ENCODE measurements at regions of chr11 and their contacts with region 1.

Region 1: GRCh38 chr11:129375751-129376657 is at the start of gene BARX2:
- ATAC-seq: peak; percentile 84 to 92 (median 88)
- H3K4me3 ChIP-seq: peak within 1 kb of the TSS; percentile 20 to 38 (median 34)
- H3K27ac ChIP-seq: no peak within 1 kb of the TSS
- H3K4me1 ChIP-seq: peaks cover 3 to 12% of the 10 kb centered on the region in 2 donors
- total RNA-seq, gene BARX2: 0.09 to 0.71 (median 0.40) TPM in 6 of 8 experiments, not detected in the others

Region 2: DNA sequence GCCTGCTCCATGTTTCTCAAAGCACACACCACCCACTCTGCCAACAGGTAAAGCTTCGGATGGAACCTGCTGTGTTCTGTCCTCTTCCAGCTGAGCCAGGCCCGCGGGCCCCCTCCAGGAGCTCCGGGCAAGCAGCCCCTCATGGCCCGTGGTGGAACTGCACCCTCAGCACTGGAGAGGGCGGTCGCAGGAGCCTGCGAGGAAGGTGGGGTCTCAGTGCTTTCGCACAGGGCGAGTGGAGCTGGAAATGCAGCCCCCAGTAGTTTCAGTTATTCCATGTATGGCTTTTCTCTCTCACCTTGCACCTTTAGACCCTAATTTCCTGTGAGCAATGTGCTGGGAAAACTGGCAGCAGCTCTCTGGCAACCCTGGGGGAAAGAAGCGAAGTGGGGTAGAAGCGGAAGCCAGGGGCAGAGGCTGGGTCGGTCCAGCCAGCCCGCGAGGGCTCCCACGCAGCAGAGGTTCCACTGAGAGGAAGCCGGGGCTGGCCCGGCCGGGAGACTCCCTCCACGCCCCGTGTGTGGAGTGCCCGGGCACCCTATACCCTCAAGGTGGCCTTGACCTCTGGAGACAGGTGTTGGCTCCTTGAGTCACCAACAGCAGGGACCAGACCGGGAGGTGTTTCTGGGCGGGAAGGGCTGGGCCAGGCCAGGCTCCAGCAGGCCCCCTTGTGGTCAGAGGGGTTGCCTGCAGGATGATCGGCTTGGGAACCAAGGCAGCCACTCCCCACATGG is 319.7 kb after region 1 on chr11:
- in situ Hi-C with region 1: loop called in 1 of 9 experiments (anchors 25 kb)
- ATAC-seq: peak; percentile 79 to 96 (median 85)
- H3K4me3 ChIP-seq: no peak overlapping the region
- H3K27ac ChIP-seq: no peak overlapping the region
- H3K4me1 ChIP-seq: no peaks in the 10 kb centered on the region

Region 3: DNA sequence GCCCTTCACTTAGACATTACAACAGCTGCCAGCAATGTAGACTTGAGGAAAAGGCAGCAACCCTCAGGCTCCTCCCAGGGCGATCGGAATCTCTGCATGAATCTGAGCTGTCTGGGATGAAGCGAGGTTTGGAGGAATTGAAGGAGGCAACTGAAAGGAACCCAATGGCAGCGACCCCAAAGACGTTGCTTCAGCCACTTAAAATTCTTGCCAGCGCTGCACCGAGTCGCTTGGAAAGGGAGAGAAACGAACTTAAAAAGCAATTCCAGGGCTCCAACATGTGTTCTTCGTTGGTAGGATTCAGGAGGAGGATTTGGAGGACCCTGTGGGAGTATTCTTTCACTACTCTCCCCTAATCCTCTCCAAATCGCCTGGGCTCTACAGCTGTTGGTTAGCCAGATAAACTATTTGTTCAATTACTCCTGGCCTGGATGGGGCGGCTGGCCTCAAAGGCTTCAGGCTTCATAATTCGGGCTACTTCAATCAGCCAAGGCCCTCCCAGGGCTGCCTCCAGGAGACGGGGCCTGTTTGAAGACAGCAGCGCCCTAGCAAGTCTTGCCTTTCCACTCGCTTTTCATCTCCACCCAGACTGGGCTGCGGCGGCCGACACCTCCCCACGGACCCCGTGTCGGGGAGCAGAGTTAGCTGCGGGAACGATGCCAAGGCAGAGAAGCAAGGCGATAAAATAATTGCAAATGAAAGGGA is 367.3 kb after region 1 on chr11:
- in situ Hi-C with region 1: loop called in 6 of 9 experiments (anchors 10 to 25 kb)
- ATAC-seq: peak in 3 of 8 experiments; percentile 47 to 56 (median 48)
- H3K4me3 ChIP-seq: no peak overlapping the region
- H3K27ac ChIP-seq: no peak overlapping the region
- H3K4me1 ChIP-seq: no peaks in the 10 kb centered on the region

Measured in motor neuron (in vitro differentiated cells).